Activated CD4-positive, alpha-beta memory T cell treated with anti-CD3 and anti-CD28 coated beads, Interleukin-2, amount 10 ng/mL, durations not matched to agents 7 days and 5 days (primary cell): ENCODE measurements at regions of chr3 and their contacts with region 1.

Region 1: DNA sequence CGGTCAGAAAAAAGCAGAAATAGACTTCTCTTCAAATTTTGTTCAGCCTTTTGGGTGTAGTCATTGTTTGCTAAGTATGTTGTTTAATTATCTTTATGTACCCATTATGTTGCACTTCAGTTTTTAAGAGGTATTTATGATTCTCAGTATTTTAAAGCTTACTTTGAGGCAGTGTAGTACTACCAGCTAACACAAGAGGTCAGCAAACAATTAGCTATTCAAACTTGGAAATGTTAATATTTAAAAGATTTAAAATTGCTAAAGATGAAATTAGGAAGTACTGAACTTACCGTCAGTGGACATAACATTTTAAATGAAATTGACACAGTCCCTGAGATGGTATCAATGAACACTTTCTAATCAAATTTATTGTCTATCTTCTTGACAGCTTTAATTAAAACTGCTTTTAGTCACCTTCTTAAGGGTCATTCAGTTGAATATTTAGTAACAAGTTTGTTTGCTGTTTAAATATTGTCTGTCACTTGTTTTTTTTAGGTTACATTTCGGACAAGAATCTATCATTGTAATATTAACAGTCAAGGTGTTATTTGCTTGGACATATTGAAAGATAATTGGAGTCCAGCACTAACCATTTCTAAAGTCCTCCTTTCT is 28.1 kb downstream of the NKIRAS1 start:
- DNase-seq: no peak
- H3K4me3 Mint-ChIP-seq: no peak overlapping the region
- H3K27ac Mint-ChIP-seq: no peak overlapping the region
- H3K4me1 Mint-ChIP-seq: no peaks in the 10 kb centered on the region
- H3K27me3 Mint-ChIP-seq: no peaks in the 10 kb centered on the region

Region 2: DNA sequence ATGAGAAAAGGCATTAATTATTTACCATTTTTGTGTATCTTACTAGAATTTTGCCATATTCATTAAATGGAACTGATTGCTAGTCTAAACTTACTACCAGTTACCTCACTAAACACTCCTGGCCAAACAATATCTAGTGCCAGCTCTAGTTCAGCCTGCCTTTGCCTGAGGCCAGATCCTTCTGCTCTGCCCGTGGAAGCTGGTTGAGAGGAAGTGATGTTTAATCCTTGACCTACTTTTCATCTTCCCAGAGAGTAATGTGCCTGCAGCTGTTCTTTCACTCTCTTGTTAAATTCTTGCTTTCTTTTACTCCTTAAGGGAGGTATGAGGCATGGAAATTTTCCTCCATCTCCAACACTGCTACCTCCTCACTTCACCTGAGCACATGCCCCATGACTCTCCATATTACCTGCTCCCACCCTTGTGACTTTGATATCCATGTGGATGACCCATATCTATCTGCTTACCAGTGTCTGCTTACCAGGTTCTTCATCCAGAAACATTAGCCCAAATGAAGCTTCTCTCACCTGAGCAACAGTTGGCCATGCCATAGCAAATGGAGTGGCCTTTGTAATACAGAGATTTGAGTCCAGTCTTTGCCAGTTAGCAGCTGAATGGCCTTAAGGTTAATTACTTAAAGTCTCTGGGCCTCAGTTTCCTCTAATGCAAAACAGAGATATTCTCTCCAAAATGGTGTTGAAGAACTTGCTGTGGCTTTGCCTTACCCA is 29.5 kb before region 1 on chr3:
- CTCF ChIA-PET with region 1: no interaction called
- POLR2A ChIA-PET with region 1: no interaction called
- DNase-seq: no peak
- H3K4me3 Mint-ChIP-seq: no peak overlapping the region
- H3K27ac Mint-ChIP-seq: no peak overlapping the region
- H3K4me1 Mint-ChIP-seq: peaks cover 18% of the 10 kb centered on the region
- H3K27me3 Mint-ChIP-seq: no peaks in the 10 kb centered on the region

Region 3: GRCh38 chr3:23877329-23877980 is 11.3 kb before region 1 on chr3:
- CTCF ChIA-PET with region 1: interaction called, 11 read pairs
- POLR2A ChIA-PET with region 1: no interaction called
- DNase-seq: no peak
- H3K4me3 Mint-ChIP-seq: no peak overlapping the region
- H3K27ac Mint-ChIP-seq: no peak overlapping the region
- H3K4me1 Mint-ChIP-seq: no peaks in the 10 kb centered on the region
- H3K27me3 Mint-ChIP-seq: no peaks in the 10 kb centered on the region

Region 4: DNA sequence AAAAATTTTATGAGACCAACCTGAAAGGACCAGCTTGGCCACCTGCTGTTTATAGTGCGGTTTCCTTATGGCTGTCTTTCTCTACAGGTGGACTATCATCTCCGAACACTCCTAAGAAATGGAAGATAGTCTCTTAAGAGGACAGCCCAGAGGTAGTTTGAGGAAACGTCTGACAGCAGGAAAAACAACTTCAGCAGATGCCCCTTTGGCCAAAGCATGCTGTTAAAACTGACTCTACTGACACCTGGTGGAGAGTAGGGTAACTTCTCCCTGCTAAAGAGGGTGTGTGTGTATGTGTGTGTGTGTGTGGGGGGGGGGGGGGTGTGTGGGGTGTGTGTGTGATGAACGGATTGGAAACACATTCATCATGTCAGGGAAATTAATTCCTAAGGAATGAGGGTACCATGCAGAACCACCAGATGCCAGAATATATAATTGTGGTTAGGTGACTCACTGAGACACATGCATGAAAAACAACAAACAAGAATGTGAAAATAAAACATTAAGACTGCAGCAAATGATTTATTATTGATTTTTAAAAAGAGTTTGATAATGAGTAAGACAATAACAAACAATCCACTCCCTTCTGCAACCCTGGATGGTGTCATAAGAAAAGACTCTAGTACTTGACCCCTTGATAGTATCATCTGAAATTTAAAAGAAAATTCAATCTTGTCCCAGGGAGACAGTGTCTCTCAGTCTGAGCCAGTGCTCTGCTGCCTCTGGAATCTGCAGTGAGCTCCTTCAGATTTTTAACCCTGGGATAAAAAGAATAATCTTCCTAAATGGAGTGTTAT is 349.4 kb after region 1 on chr3:
- CTCF ChIA-PET with region 1: interaction called, 10 read pairs
- POLR2A ChIA-PET with region 1: no interaction called
- DNase-seq: peak; percentile 18
- H3K4me3 Mint-ChIP-seq: no peak overlapping the region
- H3K27ac Mint-ChIP-seq: no peak overlapping the region
- H3K4me1 Mint-ChIP-seq: peaks cover 2% of the 10 kb centered on the region
- H3K27me3 Mint-ChIP-seq: peaks cover 2% of the 10 kb centered on the region